ENCODE measurements at regions of chr14 and their contacts with region 1.

Region 1: DNA sequence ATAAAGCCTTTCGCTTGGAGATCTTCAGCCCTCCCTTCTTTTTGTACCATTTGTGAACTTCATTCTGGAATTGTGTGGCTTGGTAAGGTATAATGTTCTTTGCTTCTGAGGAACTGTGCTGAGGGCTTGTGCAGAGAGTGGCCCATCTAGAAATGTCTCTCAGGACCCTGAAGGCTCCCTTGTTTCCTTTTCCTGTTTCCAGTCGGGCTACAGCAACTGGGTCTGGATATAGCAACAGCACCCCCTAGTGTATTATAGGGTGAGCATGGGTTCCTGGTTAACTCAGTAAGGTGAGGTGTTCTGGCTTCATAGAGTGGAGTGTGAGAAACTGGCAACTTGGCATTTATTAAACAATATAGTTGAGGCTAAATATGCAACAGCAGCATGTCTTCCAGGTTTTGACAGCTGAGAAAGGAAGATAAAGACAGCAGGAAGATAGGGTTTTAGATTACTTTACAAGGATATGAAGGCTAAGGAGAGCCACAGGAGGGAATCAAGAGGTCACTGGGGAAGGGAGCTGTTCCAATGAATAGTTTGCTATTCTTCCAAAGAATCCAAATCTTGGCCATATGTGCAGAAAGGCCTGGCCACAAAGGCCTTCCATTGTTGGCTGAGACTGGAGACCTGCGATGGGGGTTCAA is 49.1 kb upstream of the RNU6-8 start:
- DNase-seq: peak in 3 of 5 donors; percentile 37 to 56 (median 39)
- ATAC-seq: peak; percentile 63 to 84 (median 83)
- H3K4me3 ChIP-seq: no peak overlapping the region
- H3K27ac ChIP-seq: peak overlapping the region in 4 of 12 donors; percentile 0 to 63 (median 20)
- H3K4me1 ChIP-seq: peaks cover 0 to 30% (median 12%) of the 10 kb centered on the region in 12 donors
- H3K27me3 ChIP-seq: no peaks in the 10 kb centered on the region
- CTCF ChIP-seq: peak; percentile 66 to 90 (median 83)
- POLR2A ChIP-seq: no peak

Region 2: GRCh38 chr14:31510222-31510621 is 741.9 kb before region 1 on chr14:
- intact Hi-C with region 1: loop called (anchors 1 to 5 kb)
- DNase-seq: no peak
- ATAC-seq: peak in 1 of 4 donors; percentile 22
- H3K4me3 ChIP-seq: no peak overlapping the region
- H3K27ac ChIP-seq: no peak overlapping the region
- H3K4me1 ChIP-seq: peaks cover 0 to 13% (median 8%) of the 10 kb centered on the region in 12 donors
- H3K27me3 ChIP-seq: no peaks in the 10 kb centered on the region
- CTCF ChIP-seq: peak; percentile 52 to 90 (median 68)
- POLR2A ChIP-seq: no peak

Region 3: DNA sequence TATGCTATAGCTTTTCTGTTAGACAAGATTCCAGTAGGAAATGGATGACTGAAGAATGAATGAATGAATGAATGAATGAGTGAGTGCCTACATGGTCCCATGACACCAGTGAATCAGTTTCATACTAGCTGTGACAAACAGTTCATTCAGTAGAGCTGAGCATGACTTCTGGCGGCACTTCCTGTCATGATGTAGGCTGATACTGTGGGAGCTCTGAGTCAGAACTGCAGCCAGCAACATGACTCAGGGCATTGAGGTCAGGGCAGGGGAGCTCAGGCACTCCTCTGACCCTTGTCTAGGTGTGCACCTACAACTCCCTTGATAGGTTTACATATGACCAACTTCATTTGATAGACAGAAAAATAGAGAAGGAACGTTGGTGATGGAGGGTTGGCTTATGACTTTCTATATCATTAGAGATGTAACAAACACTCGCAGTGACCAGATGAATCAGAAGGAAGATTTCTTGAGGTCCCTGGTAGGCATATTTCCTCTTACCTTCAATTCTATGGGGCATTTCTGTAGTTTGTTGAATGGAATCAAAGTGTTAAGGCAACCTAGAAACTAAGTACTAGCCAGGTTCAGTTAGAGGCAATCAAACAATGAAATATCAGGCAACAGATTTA is 314.3 kb before region 1 on chr14:
- intact Hi-C with region 1: loop called in 9 of 10 experiments (anchors 2 to 5 kb)
- DNase-seq: peak; percentile 46 to 77 (median 60)
- ATAC-seq: peak; percentile 65 to 93 (median 88)
- H3K4me3 ChIP-seq: no peak overlapping the region
- H3K27ac ChIP-seq: no peak overlapping the region
- H3K4me1 ChIP-seq: peaks cover 0 to 30% (median 14%) of the 10 kb centered on the region in 12 donors
- H3K27me3 ChIP-seq: no peaks in the 10 kb centered on the region
- CTCF ChIP-seq: no peak
- POLR2A ChIP-seq: no peak

Region 4: DNA sequence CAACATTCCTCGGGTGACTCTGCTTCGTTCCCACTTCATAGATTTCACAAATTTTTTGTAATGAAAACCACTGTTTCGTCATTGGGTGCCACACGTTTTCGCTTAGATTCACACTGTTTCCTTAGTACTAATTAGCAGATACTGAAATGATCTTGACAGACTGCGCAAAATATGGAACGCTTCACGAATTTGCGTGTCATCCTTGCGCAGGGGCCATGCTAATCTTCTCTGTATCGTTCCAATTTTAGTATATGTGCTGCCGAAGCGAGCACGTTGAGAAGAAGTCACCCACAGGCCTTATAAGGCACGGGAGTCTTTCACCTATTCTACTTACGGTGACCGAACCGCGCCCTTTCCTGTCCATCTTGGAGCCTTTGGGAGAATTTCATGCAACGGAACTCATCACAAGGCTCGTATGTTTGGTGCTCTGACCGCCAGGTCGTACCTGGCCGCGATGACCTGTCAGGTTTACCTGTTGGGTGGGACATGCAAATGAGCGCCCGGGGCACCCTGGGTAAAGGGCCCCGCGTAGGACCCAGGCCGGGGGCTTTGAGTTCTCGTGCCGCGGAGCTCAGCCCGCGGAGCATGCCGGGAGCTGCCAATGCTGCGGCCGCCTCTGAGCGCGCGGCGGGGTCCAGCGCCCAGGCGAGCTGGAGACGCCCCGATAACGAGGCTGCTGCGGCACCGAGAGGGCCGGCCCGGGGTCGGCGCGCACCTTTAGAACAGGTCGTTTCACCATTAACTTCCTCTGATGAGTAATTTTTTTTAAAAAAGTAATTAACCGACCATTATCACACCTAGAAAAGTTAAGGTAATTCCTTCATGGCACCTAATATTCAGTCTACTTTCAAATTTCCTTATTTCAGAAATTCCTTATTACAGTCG is 48.9 kb before region 1 on chr14 and contains the start of gene RNU6-8:
- intact Hi-C with region 1: loop called in 3 of 10 experiments (anchors 5 kb)
- DNase-seq: peak; percentile 87 to 94 (median 92)
- ATAC-seq: peak; percentile 84 to 93 (median 92)
- H3K4me3 ChIP-seq: peak within 1 kb of the TSS; percentile 40 to 81 (median 71)
- H3K27ac ChIP-seq: peak within 1 kb of the TSS; percentile 75 to 95 (median 90)
- H3K4me1 ChIP-seq: peaks cover 0 to 39% (median 7%) of the 10 kb centered on the region in 12 donors
- H3K27me3 ChIP-seq: peaks cover 0 to 11% (median 0%) of the 10 kb centered on the region in 9 donors
- CTCF ChIP-seq: no peak
- POLR2A ChIP-seq: peak in 1 of 2 donors; percentile 70
- total RNA-seq, gene RNU6-8: not detected

Region 5: GRCh38 chr14:32560209-32560857 is 308.2 kb after region 1 on chr14:
- intact Hi-C with region 1: loop called in 1 of 10 experiments (anchors 10 kb)
- DNase-seq: peak in 3 of 5 donors; percentile 29 to 42 (median 39)
- ATAC-seq: peak; percentile 46 to 83 (median 73)
- H3K4me3 ChIP-seq: no peak overlapping the region
- H3K27ac ChIP-seq: peak overlapping the region in 10 of 12 donors; percentile 9 to 71 (median 44)
- H3K4me1 ChIP-seq: peaks cover 0 to 54% (median 21%) of the 10 kb centered on the region in 12 donors
- H3K27me3 ChIP-seq: no peaks in the 10 kb centered on the region
- CTCF ChIP-seq: peak; percentile 67 to 92 (median 80)
- POLR2A ChIP-seq: no peak